MCF 10A (cell line): ENCODE measurements at regions of chr14 and their contacts with region 1.

Region 1: GRCh38 chr14:64704143-64704742 is at the start of gene PLEKHG3:
- DNase-seq: peak; percentile 80
- H3K4me3 Mint-ChIP-seq: peak within 1 kb of the TSS; percentile 81
- H3K27ac Mint-ChIP-seq: peak within 1 kb of the TSS; percentile 49
- H3K4me1 Mint-ChIP-seq: peaks cover 53% of the 10 kb centered on the region
- H3K27me3 Mint-ChIP-seq: no peaks in the 10 kb centered on the region
- CTCF ChIP-seq: no peak
- total RNA-seq, gene PLEKHG3: 52.9 and 72.8 TPM in 2 replicates

Region 2: DNA sequence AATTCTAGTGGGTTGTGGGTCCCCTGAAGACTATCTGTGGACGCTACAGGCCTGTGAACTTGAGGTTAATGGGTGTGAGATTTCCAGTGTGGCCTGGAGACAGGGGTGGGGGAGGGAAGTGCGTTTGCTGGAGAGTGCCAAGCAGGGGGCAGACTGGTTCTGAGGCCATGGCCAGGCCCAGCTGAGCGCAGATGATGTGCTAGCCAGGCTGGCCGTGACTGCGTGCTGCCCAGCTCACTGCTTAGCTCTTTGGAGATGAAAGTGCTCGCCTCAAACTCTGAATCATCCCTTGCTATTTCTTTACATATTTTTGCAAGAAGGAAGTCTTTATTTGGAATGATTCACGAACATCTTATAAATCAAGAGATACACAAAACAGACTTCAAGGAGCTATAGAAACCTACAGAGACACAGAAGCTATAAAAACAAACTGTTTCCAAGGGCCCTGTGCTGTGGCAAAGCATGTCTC is 75.3 kb before region 1 on chr14:
- CTCF ChIA-PET with region 1: no interaction called
- POLR2A ChIA-PET with region 1: no interaction called
- intact Hi-C with region 1: no loop called
- DNase-seq: peak; percentile 26
- H3K4me3 Mint-ChIP-seq: no peak overlapping the region
- H3K27ac Mint-ChIP-seq: peak overlapping the region; percentile 61
- H3K4me1 Mint-ChIP-seq: peaks cover 14% of the 10 kb centered on the region
- H3K27me3 Mint-ChIP-seq: no peaks in the 10 kb centered on the region
- CTCF ChIP-seq: no peak

Region 3: DNA sequence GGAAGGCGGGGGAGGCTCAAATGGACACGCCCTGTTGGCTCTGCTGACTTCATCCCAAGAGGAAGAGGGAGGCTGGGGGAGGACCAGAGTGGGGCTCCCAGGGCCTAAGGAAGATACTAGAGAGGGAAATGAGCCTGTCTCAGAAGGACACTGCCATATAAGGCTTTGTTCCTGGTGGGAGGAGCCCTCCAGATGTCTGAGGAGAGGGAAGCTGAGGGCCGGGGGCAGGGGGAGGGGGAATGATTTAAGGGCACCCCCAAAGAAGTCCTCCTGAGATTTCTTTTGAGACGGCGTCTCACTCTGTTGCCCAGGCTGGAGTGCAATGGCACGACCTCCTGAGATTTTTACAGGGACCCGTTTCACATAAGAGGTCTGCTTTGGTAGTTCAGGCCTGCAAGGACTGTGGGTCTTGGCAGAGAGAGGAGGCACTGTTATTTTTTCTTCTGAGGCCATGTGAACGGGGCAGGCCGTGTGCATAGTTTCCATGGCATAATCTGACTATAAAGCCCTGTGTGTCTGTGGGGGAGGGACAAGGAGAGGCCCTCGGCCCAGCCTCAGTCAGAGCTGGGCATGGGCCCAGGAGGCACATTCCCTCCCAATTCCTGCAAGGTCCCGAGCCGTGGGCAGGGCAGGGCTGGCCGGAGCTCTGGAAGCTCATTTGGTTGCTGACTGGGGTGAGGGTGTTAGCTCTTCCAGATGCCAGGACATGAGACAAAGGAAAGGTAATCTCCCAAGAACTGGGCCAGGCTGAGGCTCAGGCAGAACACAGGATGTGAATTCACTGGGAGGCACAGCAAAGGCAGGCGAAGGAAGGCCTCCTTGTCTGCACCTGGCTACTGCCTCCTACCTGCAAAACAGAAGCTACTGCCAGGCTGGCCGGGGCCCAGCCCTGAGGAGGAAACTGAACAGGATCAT is 22.2 kb before region 1 on chr14:
- CTCF ChIA-PET with region 1: interaction called, 15 read pairs
- POLR2A ChIA-PET with region 1: interaction called, 386 read pairs
- intact Hi-C with region 1: loop called (anchors 1 kb)
- DNase-seq: peak; percentile 90
- H3K4me3 Mint-ChIP-seq: peak overlapping the region; percentile 50
- H3K27ac Mint-ChIP-seq: peak overlapping the region; percentile 98
- H3K4me1 Mint-ChIP-seq: peaks cover 26% of the 10 kb centered on the region
- H3K27me3 Mint-ChIP-seq: no peaks in the 10 kb centered on the region
- CTCF ChIP-seq: no peak

Region 4: GRCh38 chr14:64720131-64720576 is 15.9 kb after region 1 on chr14:
- CTCF ChIA-PET with region 1: interaction called, 6 read pairs
- POLR2A ChIA-PET with region 1: interaction called, 283 read pairs
- intact Hi-C with region 1: loop called (anchors 2 kb)
- DNase-seq: peak; percentile 95
- H3K4me3 Mint-ChIP-seq: peak overlapping the region; percentile 34
- H3K27ac Mint-ChIP-seq: peak overlapping the region; percentile 97
- H3K4me1 Mint-ChIP-seq: peaks cover 84% of the 10 kb centered on the region
- H3K27me3 Mint-ChIP-seq: no peaks in the 10 kb centered on the region
- CTCF ChIP-seq: no peak

Region 5: DNA sequence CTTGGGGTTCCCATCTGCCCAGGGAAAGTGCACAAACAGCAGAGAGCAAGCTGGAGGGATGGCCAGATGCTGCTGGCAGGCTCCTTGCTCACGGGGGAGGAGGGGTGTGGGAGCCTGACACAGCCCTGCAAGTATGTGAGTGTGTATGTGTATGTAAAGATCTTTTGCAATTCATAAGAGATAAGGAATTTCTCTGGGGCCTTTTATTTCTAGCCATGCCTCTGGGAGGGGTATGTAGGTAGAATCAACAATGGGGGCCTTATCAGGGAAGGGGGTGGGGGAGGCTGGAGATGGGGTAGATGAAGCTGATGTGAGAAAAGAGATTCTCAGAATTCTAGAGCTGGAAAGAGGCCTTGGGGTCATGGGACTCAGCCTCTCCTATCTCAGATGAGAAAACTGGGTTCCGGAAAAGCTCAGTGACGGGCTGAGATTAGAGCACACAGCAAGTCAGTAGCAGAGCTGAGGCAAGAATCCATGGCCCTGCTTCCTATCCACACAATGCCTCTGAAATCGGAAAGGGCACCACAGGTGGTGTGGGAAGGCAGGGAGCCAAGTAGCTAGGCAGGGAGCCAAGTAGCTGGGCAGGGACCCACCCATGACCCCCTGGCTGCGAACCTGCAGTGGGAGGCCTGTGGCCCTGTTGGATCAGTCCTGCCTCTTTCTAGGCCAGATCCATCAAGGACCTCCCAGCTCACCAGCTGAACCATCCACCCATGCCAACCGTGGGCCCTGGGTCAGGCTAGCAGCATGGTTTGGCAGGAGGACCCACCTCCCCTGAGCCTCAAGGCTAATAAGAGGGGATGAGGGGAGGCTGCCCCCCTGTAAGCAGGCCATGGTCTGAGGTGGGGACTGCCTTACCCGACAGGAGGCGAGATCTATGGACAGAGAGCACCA is 54.7 kb after region 1 on chr14:
- CTCF ChIA-PET with region 1: interaction called, 19 read pairs
- POLR2A ChIA-PET with region 1: interaction called, 48 read pairs
- intact Hi-C with region 1: loop called (anchors 1 kb)
- DNase-seq: peak; percentile 65
- H3K4me3 Mint-ChIP-seq: peak overlapping the region; percentile 20
- H3K27ac Mint-ChIP-seq: peak overlapping the region; percentile 47
- H3K4me1 Mint-ChIP-seq: peaks cover 90% of the 10 kb centered on the region
- H3K27me3 Mint-ChIP-seq: no peaks in the 10 kb centered on the region
- CTCF ChIP-seq: no peak

Region 6: DNA sequence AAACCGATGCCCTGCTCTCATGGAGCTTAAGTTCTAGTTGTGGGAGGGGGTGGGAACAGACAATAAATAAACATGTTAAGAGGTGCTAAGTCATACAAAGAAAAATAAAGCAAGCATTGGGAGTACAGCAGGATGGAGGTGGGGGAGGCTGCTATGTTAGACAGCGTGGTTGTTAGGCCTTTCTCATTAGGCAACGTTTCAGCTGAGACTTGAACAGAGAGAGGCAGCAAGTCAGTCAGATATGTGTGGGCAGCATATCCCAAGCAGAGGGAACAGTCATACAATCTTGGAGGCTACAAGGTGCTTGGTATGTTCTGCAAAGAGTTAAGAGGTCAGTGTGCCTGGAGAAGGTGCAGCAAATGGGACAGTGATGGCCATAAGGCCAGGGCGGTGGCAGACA is 1684.3 kb after region 1 on chr14:
- CTCF ChIA-PET with region 1: no interaction called
- POLR2A ChIA-PET with region 1: no interaction called
- intact Hi-C with region 1: no loop called
- DNase-seq: no peak
- H3K4me3 Mint-ChIP-seq: no peak overlapping the region
- H3K27ac Mint-ChIP-seq: no peak overlapping the region
- H3K4me1 Mint-ChIP-seq: no peaks in the 10 kb centered on the region
- H3K27me3 Mint-ChIP-seq: no peaks in the 10 kb centered on the region
- CTCF ChIP-seq: no peak